GM12878 (cell line): ENCODE measurements at regions of chr2 and their contacts with region 1.

Region 1: GRCh38 chr2:180000434-180000833 is 6.7 kb downstream of the CWC22 start:
- DNase-seq: no peak
- ATAC-seq: peak; percentile 50
- H3K4me3 ChIP-seq: no peak overlapping the region
- H3K27ac ChIP-seq: no peak overlapping the region
- H3K4me1 ChIP-seq: peaks cover under 1% of the 10 kb centered on the region; the same call in 1 of the 2 replicates
- H3K27me3 ChIP-seq: no peaks in the 10 kb centered on the region
- CTCF ChIP-seq: no peak
- EP300 ChIP-seq: no peak
- POLR2A ChIP-seq: no peak
- RAD21 ChIP-seq: no peak

Region 2: GRCh38 chr2:178152033-178152432 is 1848.4 kb before region 1 on chr2:
- CTCF ChIA-PET with region 1: no interaction called
- POLR2A ChIA-PET with region 1: interaction called, 10 read pairs
- RAD21 ChIA-PET with region 1: no interaction called
- SMC1A ChIA-PET with region 1: no interaction called
- in situ Hi-C with region 1: no loop called
- intact Hi-C with region 1: no loop called
- DNase-seq: no peak
- ATAC-seq: no peak
- H3K4me3 ChIP-seq: no peak overlapping the region
- H3K27ac ChIP-seq: no peak overlapping the region
- H3K4me1 ChIP-seq: no peaks in the 10 kb centered on the region
- H3K27me3 ChIP-seq: no peaks in the 10 kb centered on the region
- CTCF ChIP-seq: no peak
- EP300 ChIP-seq: no peak
- POLR2A ChIP-seq: no peak
- RAD21 ChIP-seq: no peak

Region 3: DNA sequence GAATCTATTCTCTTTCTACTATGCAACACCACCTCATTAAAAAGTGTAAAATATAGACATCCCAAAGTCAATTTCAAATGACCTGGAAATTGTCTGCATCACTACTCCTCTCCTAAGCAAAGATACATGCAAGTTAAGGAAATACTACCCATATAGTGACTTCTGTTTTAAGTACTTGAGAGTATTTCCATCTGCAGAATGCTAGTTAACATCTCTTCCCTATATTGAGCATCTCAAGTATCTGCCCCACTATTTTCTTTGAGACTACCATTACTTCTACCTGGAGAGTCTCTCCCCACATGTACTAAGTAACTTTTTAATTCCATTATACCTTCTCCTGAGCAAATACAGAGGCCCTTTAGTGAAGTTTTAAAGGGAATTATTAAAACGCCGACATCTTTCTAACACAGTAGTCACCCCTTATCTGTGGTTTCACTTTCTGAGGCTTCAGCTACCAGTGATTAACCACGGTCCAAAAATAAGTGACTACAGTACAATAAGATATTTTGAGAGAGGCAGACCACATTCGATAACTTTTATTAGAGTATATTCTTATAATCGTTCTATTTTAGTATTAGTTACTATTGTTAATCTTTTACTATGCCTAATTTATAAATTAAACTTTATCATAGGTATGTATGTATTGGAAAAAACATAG is 15.1 kb before region 1 on chr2:
- CTCF ChIA-PET with region 1: interaction called, 5 read pairs
- POLR2A ChIA-PET with region 1: interaction called, 4 read pairs
- RAD21 ChIA-PET with region 1: no interaction called
- SMC1A ChIA-PET with region 1: interaction called, 11 read pairs
- in situ Hi-C with region 1: no loop called
- intact Hi-C with region 1: no loop called
- DNase-seq: no peak
- ATAC-seq: peak; percentile 74
- H3K4me3 ChIP-seq: no peak overlapping the region
- H3K27ac ChIP-seq: no peak overlapping the region
- H3K4me1 ChIP-seq: no peaks in the 10 kb centered on the region
- H3K27me3 ChIP-seq: no peaks in the 10 kb centered on the region
- CTCF ChIP-seq: no peak
- EP300 ChIP-seq: no peak
- POLR2A ChIP-seq: no peak
- RAD21 ChIP-seq: no peak